Posterior vena cava (tissue), 2 donors: ENCODE measurements at regions of chr9 and their contacts with region 1.

Region 1: DNA sequence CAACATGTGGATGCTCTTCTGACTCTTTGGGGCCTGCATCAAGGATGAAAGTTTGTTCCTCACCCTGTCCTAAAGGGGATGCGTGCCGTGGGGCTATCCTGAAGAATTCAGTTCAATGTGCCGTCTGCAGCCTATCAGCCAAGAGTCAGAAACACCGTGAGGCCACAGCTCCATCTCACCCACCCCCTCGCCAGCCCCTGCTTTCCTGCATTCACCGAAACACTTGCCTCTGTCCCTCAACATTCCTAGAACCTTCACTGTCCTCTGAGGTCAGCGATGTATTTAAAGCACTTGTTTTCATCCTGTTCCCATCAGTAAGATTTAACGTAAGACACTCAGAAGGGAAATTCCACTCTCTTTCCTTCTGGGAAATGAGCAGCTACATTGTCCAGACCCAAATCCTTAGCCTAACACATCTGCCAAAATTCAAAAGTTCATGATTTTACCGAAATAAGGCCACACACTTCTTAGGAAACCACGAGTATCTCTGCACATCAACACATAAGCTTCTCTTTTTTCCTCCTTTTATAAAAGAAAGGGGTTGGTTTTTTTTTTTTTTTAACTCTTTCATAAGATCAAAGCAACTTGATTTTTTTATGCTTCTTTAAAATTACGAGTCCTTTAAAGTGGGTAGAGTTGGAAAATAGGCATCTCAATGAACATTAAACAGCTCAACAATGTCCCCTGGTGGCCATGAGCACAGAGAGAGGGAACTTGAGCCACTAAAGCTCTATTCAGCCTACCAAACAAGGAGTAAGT is 100.7 kb downstream of the SUSD1 start:
- DNase-seq: no peak

Region 2: GRCh38 chr9:111759762-111760639 is 314.4 kb before region 1 on chr9:
- intact Hi-C with region 1: loop called in 1 of 2 experiments (anchors 2 kb)
- DNase-seq: no peak

Region 3: GRCh38 chr9:111896353-111896958 is 178.0 kb before region 1 on chr9 and contains the start of gene UGCG:
- intact Hi-C with region 1: loop called in 1 of 2 experiments (anchors 10 kb)
- DNase-seq: peak; percentile 97
- total RNA-seq, gene UGCG: 21.0 to 32.7 TPM

Region 4: GRCh38 chr9:112218908-112219307 is 144.5 kb after region 1 on chr9:
- intact Hi-C with region 1: no loop called
- DNase-seq: no peak